ENCODE measurements at regions of chr5 and their contacts with region 1.

Region 1: GRCh38 chr5:87412630-87413342 is at the start of gene CCNH:
- DNase-seq: peak; percentile 95
- H3K4me3 ChIP-seq: peak within 1 kb of the TSS; percentile 89
- H3K27ac ChIP-seq: peak within 1 kb of the TSS; percentile 55
- H3K4me1 ChIP-seq: peaks cover 13% of the 10 kb centered on the region
- H3K27me3 ChIP-seq: no peaks in the 10 kb centered on the region
- CTCF ChIP-seq: no peak
- total RNA-seq, gene CCNH: 38.5 and 43.9 TPM in 2 replicates

Region 2: GRCh38 chr5:87020099-87020934 is 392.5 kb before region 1 on chr5:
- CTCF ChIA-PET with region 1: no interaction called
- POLR2A ChIA-PET with region 1: interaction called, 9 read pairs
- intact Hi-C with region 1: loop called (anchors 5 kb)
- DNase-seq: peak; percentile 49 to 75
- H3K4me3 ChIP-seq: no peak overlapping the region
- H3K27ac ChIP-seq: no peak overlapping the region
- H3K4me1 ChIP-seq: peaks cover 23% of the 10 kb centered on the region
- H3K27me3 ChIP-seq: no peaks in the 10 kb centered on the region
- CTCF ChIP-seq: no peak

Region 3: GRCh38 chr5:87780831-87781760 is 368.3 kb after region 1 on chr5:
- CTCF ChIA-PET with region 1: no interaction called
- POLR2A ChIA-PET with region 1: no interaction called
- intact Hi-C with region 1: loop called (anchors 5 kb)
- DNase-seq: peak; percentile 63 to 69
- H3K4me3 ChIP-seq: peak overlapping the region; percentile 36; the same call in 1 of the 2 replicates
- H3K27ac ChIP-seq: no peak overlapping the region
- H3K4me1 ChIP-seq: no peaks in the 10 kb centered on the region
- H3K27me3 ChIP-seq: no peaks in the 10 kb centered on the region
- CTCF ChIP-seq: peak; percentile 90

Region 4: DNA sequence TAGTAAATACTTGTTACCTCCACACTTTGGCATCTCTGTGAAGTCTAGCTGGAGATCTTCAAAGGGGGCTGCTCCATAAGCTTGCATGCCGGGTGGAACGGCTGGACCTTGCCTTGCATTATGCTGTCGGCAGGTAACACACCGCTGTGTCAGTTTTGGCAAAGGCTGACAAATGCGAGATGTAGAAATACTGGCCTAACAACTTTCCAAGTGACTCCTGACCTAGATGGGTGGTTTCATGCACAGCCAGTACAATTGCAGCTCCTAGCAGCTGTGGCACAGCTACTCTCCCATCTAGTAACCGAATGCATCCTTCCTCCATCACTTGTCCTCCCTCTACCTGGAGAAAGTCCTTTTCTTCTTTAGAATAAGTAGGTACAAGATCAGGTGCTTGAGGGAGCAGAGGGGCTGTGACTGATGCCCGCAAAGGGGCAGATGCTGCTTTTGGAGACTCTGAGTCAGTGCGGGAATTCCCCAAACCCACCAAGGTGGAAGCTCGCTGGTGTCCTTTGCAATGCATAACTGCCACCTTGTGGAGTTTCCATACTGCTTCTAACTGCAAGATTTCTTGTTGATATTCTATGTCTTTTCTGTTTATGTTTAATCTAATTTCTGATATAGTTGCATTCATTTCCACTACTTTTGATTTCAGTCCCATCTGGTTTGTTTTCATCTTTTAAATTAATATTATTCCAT is 777.5 kb after region 1 on chr5:
- CTCF ChIA-PET with region 1: no interaction called
- POLR2A ChIA-PET with region 1: no interaction called
- intact Hi-C with region 1: loop called (anchors 5 kb)
- DNase-seq: peak; percentile 64 to 85
- H3K4me3 ChIP-seq: peak overlapping the region; percentile 57
- H3K27ac ChIP-seq: peak overlapping the region; percentile 80
- H3K4me1 ChIP-seq: peaks cover 12% of the 10 kb centered on the region
- H3K27me3 ChIP-seq: no peaks in the 10 kb centered on the region
- CTCF ChIP-seq: peak; percentile 75

Region 5: DNA sequence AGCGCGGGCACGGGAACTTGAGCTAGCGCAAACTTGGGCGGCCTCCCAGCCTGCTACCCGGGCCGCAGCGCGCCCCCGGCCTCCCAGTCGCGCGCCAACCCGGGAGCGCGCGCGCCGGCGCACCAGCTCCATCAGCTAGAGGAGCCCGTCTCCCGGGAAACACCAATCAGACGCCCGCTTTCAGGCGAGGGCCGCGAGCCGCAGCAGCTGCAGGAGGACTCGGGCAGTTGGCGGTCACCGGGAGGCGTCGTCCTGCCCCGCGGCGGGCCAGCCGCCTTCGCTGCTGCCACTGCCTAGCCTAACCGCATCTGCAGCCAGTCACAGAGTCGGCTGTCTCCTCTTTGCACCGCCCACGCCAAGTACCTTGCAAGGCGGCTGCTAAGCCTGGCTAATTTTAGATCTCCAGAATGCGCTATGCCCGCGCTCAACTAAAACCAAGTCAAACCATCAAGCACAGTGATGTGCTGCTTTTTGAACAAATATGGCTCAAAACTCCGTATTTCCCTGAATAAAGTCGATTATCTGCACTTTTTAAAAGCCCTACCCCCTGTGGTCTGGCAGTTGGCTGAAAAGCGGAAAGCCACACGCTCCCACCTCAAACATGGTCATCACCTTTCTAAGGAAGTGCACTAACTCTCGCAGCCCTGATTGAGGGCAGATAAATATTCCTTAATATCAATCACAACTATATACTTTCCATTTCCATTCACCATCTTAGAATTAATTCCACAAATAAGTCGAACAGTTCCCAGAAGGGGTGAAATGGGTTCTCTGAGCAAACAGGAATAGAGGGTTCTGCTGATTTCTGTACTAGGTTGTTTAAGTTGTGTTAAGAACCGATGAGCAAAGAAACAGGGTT is 1248.4 kb after region 1 on chr5:
- CTCF ChIA-PET with region 1: no interaction called
- POLR2A ChIA-PET with region 1: interaction called, 17 read pairs
- intact Hi-C with region 1: no loop called
- DNase-seq: peak; percentile 84 to 97
- H3K4me3 ChIP-seq: peak overlapping the region; percentile 58
- H3K27ac ChIP-seq: peak overlapping the region; percentile 54
- H3K4me1 ChIP-seq: peaks cover 9% of the 10 kb centered on the region
- H3K27me3 ChIP-seq: no peaks in the 10 kb centered on the region
- CTCF ChIP-seq: no peak

Region 6: GRCh38 chr5:88690409-88691229 is 1277.8 kb after region 1 on chr5:
- CTCF ChIA-PET with region 1: no interaction called
- POLR2A ChIA-PET with region 1: no interaction called
- intact Hi-C with region 1: loop called (anchors 5 kb)
- DNase-seq: peak in 1 of 2 experiments; percentile 62
- H3K4me3 ChIP-seq: peak overlapping the region; percentile 24; the same call in 1 of the 2 replicates
- H3K27ac ChIP-seq: no peak overlapping the region
- H3K4me1 ChIP-seq: peaks cover 18% of the 10 kb centered on the region
- H3K27me3 ChIP-seq: no peaks in the 10 kb centered on the region
- CTCF ChIP-seq: peak; percentile 95

Region 7: DNA sequence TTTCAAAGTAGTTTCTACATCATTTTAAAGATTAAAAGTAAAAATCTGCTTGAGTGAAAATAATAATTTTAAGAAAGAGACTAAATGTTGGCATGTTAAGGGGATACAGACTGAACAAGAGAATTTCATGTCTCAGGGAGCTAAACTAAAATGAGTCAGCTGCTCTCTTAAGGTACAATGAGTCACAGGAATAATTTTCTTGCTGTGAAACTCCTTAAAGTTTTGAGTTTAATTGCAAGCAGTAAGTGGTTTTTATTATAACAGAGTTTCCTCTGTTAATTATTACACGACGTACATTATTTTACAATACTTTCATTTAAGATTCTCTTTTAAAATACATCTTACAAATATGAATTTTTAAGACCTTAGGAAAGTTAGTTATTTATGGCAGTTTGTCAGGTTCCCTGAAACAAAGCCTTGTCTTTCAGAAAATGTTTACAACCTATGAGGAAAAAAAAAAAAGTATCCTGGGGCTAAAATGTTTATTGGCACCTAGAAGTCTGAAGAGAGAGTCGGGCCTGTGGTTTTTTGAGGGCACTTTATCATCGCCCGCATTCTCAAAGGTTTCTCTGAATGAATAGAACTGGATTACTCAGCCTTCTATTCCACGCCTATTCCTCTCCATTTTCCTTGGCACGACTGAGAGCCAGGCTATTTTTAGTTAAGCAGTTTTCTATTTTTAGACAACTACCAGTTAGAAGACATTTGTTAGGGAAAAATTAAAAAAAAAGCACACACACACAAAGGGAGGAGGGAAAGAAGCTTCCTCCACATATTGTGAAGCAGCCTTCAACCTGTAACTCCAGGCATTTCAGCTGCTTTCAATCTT is 1372.8 kb after region 1 on chr5:
- CTCF ChIA-PET with region 1: no interaction called
- POLR2A ChIA-PET with region 1: no interaction called
- intact Hi-C with region 1: loop called (anchors 5 kb)
- DNase-seq: peak; percentile 68 to 93
- H3K4me3 ChIP-seq: peak overlapping the region; percentile 28; the same call in 1 of the 2 replicates
- H3K27ac ChIP-seq: peak overlapping the region; percentile 96
- H3K4me1 ChIP-seq: peaks cover 32% of the 10 kb centered on the region
- H3K27me3 ChIP-seq: no peaks in the 10 kb centered on the region
- CTCF ChIP-seq: no peak

Measured in PC-9 (cell line).